WTC11 (cell line): ENCODE measurements at regions of chr6 and their contacts with region 1.

Region 1: DNA sequence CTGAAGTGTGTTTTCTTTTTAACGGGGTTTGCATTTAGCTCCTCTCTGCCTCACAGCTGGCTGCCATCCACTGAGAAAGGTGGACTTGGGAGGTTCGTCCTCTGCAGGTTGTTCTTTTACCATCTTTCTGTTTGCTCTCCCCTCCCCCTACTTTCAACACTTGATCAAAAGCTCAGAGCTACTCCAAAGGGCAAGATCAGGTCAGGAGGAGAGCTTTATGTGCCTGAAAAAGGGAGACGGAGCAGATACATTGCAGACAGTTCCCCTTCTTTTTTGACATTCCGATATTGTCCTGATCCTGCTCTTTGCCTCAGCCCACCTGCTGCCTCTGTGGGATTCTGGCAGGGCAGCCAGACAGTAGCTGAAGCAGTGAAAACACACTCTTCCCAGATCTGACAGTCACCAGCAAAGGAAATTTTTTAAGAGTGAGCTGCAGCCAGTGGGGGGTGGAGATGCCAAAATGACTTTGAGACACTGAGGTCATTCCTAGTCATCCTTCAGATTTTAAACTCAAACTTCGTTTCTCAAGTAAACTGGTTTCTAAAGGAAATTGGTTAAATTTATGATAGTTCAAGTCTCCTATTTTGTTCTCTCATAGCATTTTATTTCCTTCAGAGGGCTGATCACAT is 26.5 kb downstream of the SMLR1 start:
- DNase-seq: no peak
- ATAC-seq: peak; percentile 49
- H3K4me3 Mint-ChIP-seq: no peak overlapping the region
- H3K27ac Mint-ChIP-seq: no peak overlapping the region
- H3K4me1 Mint-ChIP-seq: peaks cover 31% of the 10 kb centered on the region
- H3K27me3 Mint-ChIP-seq: no peaks in the 10 kb centered on the region
- CTCF ChIP-seq: no peak

Region 2: GRCh38 chr6:130872250-130873095 is 18.8 kb after region 1 on chr6:
- CTCF ChIA-PET with region 1: interaction called, 14 read pairs
- POLR2A ChIA-PET with region 1: no interaction called
- DNase-seq: peak; percentile 80
- ATAC-seq: peak; percentile 67
- H3K4me3 Mint-ChIP-seq: no peak overlapping the region
- H3K27ac Mint-ChIP-seq: no peak overlapping the region
- H3K4me1 Mint-ChIP-seq: peaks cover 6% of the 10 kb centered on the region; the same call in 1 of the 2 replicates
- H3K27me3 Mint-ChIP-seq: no peaks in the 10 kb centered on the region
- CTCF ChIP-seq: peak; percentile 93